CD8-positive, alpha-beta T cell (primary cell): ENCODE measurements at regions of chr6 and their contacts with region 1.

Region 1: GRCh38 chr6:32868257-32868788 is 14.3 kb downstream of the PSMB9 start:
- DNase-seq: peak; percentile 72 to 93 (median 89)
- ATAC-seq: peak; percentile 80
- H3K4me3 ChIP-seq: no peak overlapping the region
- H3K4me3 Mint-ChIP-seq: no peak overlapping the region
- H3K27ac ChIP-seq: no peak overlapping the region
- H3K27ac Mint-ChIP-seq: no peak overlapping the region
- H3K4me1 ChIP-seq: peaks cover 29% of the 10 kb centered on the region
- H3K4me1 Mint-ChIP-seq: peaks cover 28% of the 10 kb centered on the region
- H3K27me3 ChIP-seq: no peaks in the 10 kb centered on the region
- H3K27me3 Mint-ChIP-seq: no peaks in the 10 kb centered on the region
- CTCF ChIP-seq: peak; percentile 96

Region 2: GRCh38 chr6:32413427-32414047 is 454.8 kb before region 1 on chr6:
- CTCF ChIA-PET with region 1: interaction called, 31 read pairs
- POLR2A ChIA-PET with region 1: no interaction called
- intact Hi-C with region 1: loop called (anchors 1 kb)
- DNase-seq: peak; percentile 74 to 91 (median 87)
- ATAC-seq: peak; percentile 81
- H3K4me3 ChIP-seq: no peak overlapping the region
- H3K4me3 Mint-ChIP-seq: no peak overlapping the region
- H3K27ac ChIP-seq: no peak overlapping the region
- H3K27ac Mint-ChIP-seq: no peak overlapping the region
- H3K4me1 ChIP-seq: peaks cover 4% of the 10 kb centered on the region
- H3K4me1 Mint-ChIP-seq: peaks cover 9% of the 10 kb centered on the region
- H3K27me3 ChIP-seq: peaks cover 0 to 19% of the 10 kb centered on the region in 2 experiments
- H3K27me3 Mint-ChIP-seq: peaks cover 44% of the 10 kb centered on the region
- CTCF ChIP-seq: peak; percentile 86

Region 3: GRCh38 chr6:32700391-32701040 is 167.8 kb before region 1 on chr6:
- CTCF ChIA-PET with region 1: interaction called, 7 read pairs
- POLR2A ChIA-PET with region 1: no interaction called
- intact Hi-C with region 1: loop called (anchors 1 to 5 kb)
- DNase-seq: peak in 6 of 9 experiments; percentile 2 to 71 (median 46)
- ATAC-seq: peak; percentile 49
- H3K4me3 ChIP-seq: no peak overlapping the region
- H3K4me3 Mint-ChIP-seq: no peak overlapping the region
- H3K27ac ChIP-seq: no peak overlapping the region
- H3K27ac Mint-ChIP-seq: no peak overlapping the region
- H3K4me1 ChIP-seq: no peaks in the 10 kb centered on the region
- H3K4me1 Mint-ChIP-seq: peaks cover 4% of the 10 kb centered on the region
- H3K27me3 ChIP-seq: no peaks in the 10 kb centered on the region
- H3K27me3 Mint-ChIP-seq: peaks cover 40% of the 10 kb centered on the region
- CTCF ChIP-seq: peak; percentile 86

Region 4: DNA sequence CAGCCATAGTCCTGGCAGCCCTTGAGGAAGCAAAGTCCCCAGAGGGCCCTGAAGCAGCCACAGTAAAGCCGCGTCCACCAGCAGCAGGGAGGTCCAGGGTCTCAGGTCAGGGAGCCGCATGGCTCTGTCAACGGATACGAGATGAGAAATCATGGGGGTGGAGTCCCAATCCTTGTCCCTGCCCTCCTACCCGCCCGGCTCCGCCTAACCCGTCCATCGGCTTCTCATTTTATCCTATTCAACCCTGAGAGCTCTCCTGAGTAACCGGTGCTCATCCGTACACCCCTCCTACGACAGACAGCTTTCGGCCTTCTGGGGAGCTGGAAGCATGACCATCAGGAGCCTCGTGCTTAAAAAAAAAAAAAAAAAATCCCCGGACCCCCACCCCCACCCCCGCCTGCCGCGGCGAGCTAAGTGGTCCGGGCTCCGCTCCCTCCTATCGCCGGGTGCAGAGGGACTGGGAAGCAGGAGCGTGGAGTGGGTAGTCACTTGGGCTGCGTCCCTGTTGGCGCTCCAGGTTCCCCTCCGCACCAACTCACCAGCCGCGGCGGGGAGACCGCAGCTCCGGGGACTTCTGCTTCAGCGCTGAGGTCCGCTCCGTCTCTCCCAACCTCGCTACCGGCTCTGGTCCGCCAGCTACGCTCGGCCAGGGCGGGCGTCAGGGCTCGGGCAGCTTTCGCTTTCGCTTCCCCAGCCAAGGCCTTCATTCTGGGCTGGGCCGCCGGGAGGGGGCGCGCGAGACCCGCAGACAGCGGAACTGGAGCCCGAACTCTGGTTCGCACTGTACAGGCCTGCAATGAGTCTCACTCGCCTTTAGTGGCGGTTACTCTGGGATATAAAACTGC is 30.0 kb before region 1 on chr6 and contains the start of gene TAP2:
- CTCF ChIA-PET with region 1: interaction called, 320 read pairs
- POLR2A ChIA-PET with region 1: interaction called, 84 read pairs
- intact Hi-C with region 1: loop called (anchors 1 kb)
- DNase-seq: peak; percentile 96 to 99 (median 97)
- ATAC-seq: peak; percentile 90
- H3K4me3 ChIP-seq: peak within 1 kb of the TSS; percentile 64 to 83
- H3K4me3 Mint-ChIP-seq: peak within 1 kb of the TSS; percentile 93
- H3K27ac ChIP-seq: peak within 1 kb of the TSS; percentile 88 to 100
- H3K27ac Mint-ChIP-seq: peak within 1 kb of the TSS; percentile 98
- H3K4me1 ChIP-seq: peaks cover 60% of the 10 kb centered on the region
- H3K4me1 Mint-ChIP-seq: peaks cover 89% of the 10 kb centered on the region
- H3K27me3 ChIP-seq: no peaks in the 10 kb centered on the region
- H3K27me3 Mint-ChIP-seq: no peaks in the 10 kb centered on the region
- CTCF ChIP-seq: peak; percentile 99
- total RNA-seq, gene TAP2: 88.9 to 91.0 TPM

Region 5: DNA sequence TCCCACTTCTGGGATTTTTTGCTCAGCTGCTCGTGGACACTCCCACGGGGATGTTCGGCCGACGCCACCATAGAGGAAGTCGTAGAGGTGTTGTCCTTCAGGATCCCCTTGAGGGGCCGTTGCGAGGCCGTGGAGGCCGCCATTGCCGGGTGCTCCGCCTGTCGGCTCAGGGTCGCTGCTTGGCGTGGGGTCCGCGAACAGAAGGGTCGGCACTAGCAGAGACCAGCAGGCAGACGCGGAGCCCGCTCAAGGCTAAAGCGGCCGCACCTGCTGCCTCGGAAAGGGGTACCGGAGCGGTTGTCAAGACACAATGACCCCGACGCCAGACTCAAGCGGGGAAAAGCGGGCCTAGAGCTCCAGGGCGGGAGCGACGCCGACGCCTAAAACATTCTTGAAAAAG is 11.4 kb after region 1 on chr6:
- CTCF ChIA-PET with region 1: interaction called, 12 read pairs
- POLR2A ChIA-PET with region 1: no interaction called
- intact Hi-C with region 1: no loop called
- DNase-seq: no peak
- ATAC-seq: no peak
- H3K4me3 ChIP-seq: no peak overlapping the region
- H3K4me3 Mint-ChIP-seq: no peak overlapping the region
- H3K27ac ChIP-seq: no peak overlapping the region
- H3K27ac Mint-ChIP-seq: no peak overlapping the region
- H3K4me1 ChIP-seq: no peaks in the 10 kb centered on the region
- H3K4me1 Mint-ChIP-seq: no peaks in the 10 kb centered on the region
- H3K27me3 ChIP-seq: no peaks in the 10 kb centered on the region
- H3K27me3 Mint-ChIP-seq: no peaks in the 10 kb centered on the region
- CTCF ChIP-seq: no peak

Region 6: GRCh38 chr6:32952817-32953739 is 84.8 kb after region 1 on chr6 and contains the start of gene HLA-DMA:
- CTCF ChIA-PET with region 1: interaction called, 36 read pairs
- POLR2A ChIA-PET with region 1: interaction called, 3 read pairs
- intact Hi-C with region 1: no loop called
- DNase-seq: peak; percentile 55 to 92 (median 77)
- ATAC-seq: peak; percentile 98
- H3K4me3 ChIP-seq: peak within 1 kb of the TSS; percentile 49 to 52
- H3K4me3 Mint-ChIP-seq: peak within 1 kb of the TSS; percentile 85
- H3K27ac ChIP-seq: peak within 1 kb of the TSS; percentile 28 to 66
- H3K27ac Mint-ChIP-seq: peak within 1 kb of the TSS; percentile 93
- H3K4me1 ChIP-seq: peaks cover 29% of the 10 kb centered on the region
- H3K4me1 Mint-ChIP-seq: peaks cover 55% of the 10 kb centered on the region
- H3K27me3 ChIP-seq: no peaks in the 10 kb centered on the region
- H3K27me3 Mint-ChIP-seq: no peaks in the 10 kb centered on the region
- CTCF ChIP-seq: peak; percentile 86
- total RNA-seq, gene HLA-DMA: 25.9 to 32.3 TPM

Region 7: GRCh38 chr6:33204378-33205190 is 336.3 kb after region 1 on chr6 and contains the start of gene HSD17B8:
- CTCF ChIA-PET with region 1: no interaction called
- POLR2A ChIA-PET with region 1: no interaction called
- intact Hi-C with region 1: no loop called
- DNase-seq: peak; percentile 75 to 95 (median 91)
- ATAC-seq: peak; percentile 58
- H3K4me3 ChIP-seq: peak within 1 kb of the TSS; percentile 82 to 85
- H3K4me3 Mint-ChIP-seq: peak within 1 kb of the TSS; percentile 93
- H3K27ac ChIP-seq: peak within 1 kb of the TSS; percentile 59 to 64
- H3K27ac Mint-ChIP-seq: peak within 1 kb of the TSS; percentile 86
- H3K4me1 ChIP-seq: peaks cover 53% of the 10 kb centered on the region
- H3K4me1 Mint-ChIP-seq: peaks cover 68% of the 10 kb centered on the region
- H3K27me3 ChIP-seq: no peaks in the 10 kb centered on the region
- H3K27me3 Mint-ChIP-seq: no peaks in the 10 kb centered on the region
- CTCF ChIP-seq: no peak
- total RNA-seq, gene HSD17B8: 7.0 to 10.4 TPM

Region 8: DNA sequence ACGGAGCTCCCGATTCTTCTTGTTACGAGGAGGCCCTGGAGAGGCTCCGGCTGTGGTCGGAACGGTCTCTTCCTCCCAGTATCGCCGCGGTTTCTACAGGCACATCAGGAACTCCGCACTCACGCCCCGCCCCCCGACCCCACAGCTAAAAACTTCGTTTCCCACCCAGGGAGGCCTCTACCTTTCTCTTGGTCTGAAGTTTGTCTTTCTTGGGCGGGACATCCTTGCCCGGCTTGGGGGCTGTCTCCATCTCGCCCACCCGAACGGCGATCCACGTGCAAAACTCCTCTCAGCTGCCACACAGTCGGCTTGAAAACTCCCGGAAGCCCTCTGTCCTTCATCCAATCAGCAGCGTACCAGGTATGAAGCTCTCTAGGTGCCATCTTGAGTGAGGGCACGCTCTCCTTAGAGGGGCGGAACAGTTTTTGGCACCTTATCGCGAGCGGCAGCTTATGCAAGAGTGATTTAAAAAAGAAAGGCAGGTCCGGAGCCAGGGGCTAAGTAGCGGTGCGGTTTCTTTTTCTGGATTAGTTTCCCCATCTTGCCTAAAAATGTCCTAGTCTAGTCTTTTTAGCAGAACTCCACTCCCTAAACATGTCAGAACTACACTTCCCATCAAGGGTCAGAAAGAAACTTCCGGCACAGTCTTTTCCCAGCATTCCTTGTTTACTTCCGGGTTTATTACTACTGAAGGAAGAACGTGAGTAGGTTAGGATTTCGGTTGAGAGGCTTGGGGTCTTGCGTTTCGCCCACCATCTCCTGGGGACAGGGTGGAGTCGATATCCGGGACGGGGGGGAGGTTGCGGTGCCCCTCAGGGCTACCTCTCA is 420.8 kb after region 1 on chr6 and contains the starts of genes PFDN6 and WDR46:
- CTCF ChIA-PET with region 1: no interaction called
- POLR2A ChIA-PET with region 1: no interaction called
- intact Hi-C with region 1: no loop called
- DNase-seq: peak; percentile 64 to 94 (median 84)
- ATAC-seq: peak; percentile 96
- H3K4me3 ChIP-seq: peak within 1 kb of the TSS; percentile 81 to 98
- H3K4me3 Mint-ChIP-seq: peak within 1 kb of the TSS; percentile 99
- H3K27ac ChIP-seq: peak within 1 kb of the TSS; percentile 59 to 82
- H3K27ac Mint-ChIP-seq: peak within 1 kb of the TSS; percentile 88
- H3K4me1 ChIP-seq: peaks cover 25% of the 10 kb centered on the region
- H3K4me1 Mint-ChIP-seq: peaks cover 41% of the 10 kb centered on the region
- H3K27me3 ChIP-seq: no peaks in the 10 kb centered on the region
- H3K27me3 Mint-ChIP-seq: no peaks in the 10 kb centered on the region
- CTCF ChIP-seq: no peak
- total RNA-seq, gene PFDN6: 9.4 to 11.2 TPM
- total RNA-seq, gene WDR46: 19.9 to 22.1 TPM